ENCODE measurements at regions of chr19 and their contacts with region 1.

Region 1: DNA sequence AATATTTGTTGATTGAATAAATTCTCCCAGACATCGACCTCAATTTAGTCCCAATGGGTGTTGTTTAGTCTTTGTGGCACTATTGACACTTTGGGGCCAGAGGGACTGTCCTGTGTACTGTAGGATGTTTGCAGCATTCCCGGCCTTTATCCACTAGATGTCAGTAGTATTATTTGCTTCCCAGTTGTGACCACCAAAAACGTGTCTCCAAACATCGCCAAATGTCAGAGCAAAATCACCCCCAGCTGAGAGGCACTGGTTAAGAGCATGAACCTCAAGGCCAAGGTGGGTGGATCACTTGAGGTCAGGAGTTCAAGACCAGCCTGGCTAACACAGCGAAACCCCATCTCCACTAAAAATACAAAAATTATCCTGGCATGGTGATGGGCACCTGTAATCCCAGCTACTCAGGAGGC is 15.4 kb downstream of the NLRP12 start:
- DNase-seq: no peak
- ATAC-seq: no peak

Region 2: GRCh38 chr19:54029930-54030490 is 221.3 kb after region 1 on chr19:
- intact Hi-C with region 1: loop called (anchors 10 kb)
- DNase-seq: no peak
- ATAC-seq: no peak

Region 3: DNA sequence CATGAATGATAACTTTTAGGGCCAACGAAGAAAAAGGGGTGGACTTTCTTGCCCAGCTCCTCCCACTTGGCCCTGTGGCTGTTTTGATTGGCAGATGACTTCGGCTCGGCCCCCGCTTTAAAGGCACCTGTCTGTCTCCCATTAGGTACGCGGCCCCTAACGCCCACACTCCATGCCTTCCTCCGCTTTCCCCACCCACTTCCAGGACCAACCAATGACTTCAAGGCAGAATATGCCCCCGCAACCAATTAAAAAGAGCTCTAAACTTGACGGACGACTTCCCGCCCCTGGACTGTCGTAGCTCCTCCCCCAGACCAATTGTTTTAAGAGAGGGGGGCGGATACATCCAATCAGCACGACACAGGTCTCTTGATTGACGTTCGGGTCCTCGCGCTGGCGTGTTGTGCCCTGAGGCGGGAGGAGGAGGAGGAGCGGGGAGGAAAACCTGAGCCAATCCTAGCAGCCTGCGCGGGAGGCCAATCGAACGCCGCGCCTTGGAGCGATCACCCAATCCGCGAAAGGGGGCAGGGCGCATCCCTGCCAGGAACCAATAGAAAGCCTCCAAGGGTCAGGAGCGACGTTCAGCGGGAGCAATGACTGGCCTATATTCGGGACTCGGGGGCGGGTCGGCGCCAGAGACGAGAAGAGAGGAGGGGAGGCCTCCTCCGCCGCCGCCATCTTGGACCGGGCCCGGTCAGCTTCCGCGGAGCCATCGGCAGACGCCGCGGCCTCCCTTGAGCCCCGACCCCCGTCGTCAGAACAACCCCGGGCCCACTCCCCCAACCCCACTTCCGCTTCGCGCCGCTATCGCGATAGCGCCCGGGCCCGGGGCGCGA is 328.6 kb after region 1 on chr19 and contains the start of gene CNOT3:
- intact Hi-C with region 1: no loop called
- DNase-seq: peak; percentile 99
- ATAC-seq: peak; percentile 93
- total RNA-seq, gene CNOT3: 17.6 TPM